ENCODE measurements at regions of chr5 and their contacts with region 1.

Region 1: GRCh38 chr5:1344975-1345838 is at the start of gene CLPTM1L:
- DNase-seq: peak; percentile 37 to 92
- H3K4me3 ChIP-seq: peak within 1 kb of the TSS; percentile 62 to 96
- H3K27ac ChIP-seq: peak within 1 kb of the TSS; percentile 79 to 88
- H3K4me1 ChIP-seq: peaks cover 2 to 17% of the 10 kb centered on the region in 2 donors
- H3K27me3 ChIP-seq: no peaks in the 10 kb centered on the region
- CTCF ChIP-seq: peak in 1 of 3 experiments; percentile 25
- total RNA-seq, gene CLPTM1L: 23.6 TPM

Region 2: DNA sequence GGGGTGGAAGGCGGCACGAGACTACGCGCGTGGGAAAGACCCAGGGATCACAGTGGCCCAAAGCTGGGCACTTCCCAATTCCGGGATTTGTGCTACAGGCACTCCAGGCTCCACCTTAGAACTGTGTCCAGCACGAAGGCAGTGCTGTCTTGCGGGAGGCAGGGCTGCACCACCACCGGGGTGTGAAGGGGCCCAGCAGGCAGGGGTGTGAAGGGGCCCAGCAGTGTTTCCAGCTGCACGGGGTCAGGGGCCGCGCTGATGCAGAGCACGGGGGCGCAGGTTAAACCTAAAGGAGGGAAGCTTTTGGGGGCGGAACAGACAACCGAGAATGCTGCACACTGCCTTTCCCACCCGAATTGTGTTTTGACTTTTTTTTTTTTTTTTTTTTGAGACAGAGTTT is 1074.9 kb before region 1 on chr5:
- intact Hi-C with region 1: loop called (anchors 5 kb)
- DNase-seq: peak in 1 of 2 donors; percentile 62
- H3K4me3 ChIP-seq: peak overlapping the region in 1 of 2 donors; percentile 99
- H3K27ac ChIP-seq: no peak overlapping the region
- H3K4me1 ChIP-seq: peaks cover 0 to 7% of the 10 kb centered on the region in 2 donors
- H3K27me3 ChIP-seq: no peaks in the 10 kb centered on the region
- CTCF ChIP-seq: no peak

Region 3: DNA sequence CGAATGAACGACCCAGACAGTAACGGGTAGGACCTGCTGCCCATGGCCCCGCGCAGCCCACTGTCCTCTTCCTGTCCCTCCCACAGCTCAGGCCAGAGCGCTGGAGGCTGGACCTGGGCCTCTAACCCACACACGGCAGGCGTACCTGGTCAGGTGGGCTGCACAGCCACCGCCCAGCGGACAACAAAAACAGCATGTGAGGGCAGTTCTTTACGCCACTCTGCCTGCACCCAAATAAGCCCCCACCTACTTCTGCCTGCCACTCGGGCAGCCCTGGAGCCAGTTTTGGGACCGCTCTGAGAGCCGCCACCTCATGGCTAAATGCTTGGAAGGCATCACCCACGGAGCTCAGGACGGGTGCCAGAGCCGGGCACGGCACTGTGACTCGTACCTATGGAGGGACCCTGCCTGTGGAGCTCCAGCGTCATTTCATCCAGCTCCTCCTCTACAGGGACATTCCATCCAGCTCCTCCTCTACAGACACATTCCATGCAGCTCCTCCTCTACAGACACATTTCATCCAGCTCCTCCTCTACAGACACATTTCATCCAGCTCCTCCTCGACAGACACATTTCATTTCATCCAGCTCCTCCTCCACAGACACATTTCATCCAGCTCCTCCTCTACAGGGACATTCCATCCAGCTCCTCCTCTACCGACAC is 19.2 kb before region 1 on chr5:
- intact Hi-C with region 1: no loop called
- DNase-seq: peak in 1 of 2 donors; percentile 51
- H3K4me3 ChIP-seq: no peak overlapping the region
- H3K27ac ChIP-seq: no peak overlapping the region
- H3K4me1 ChIP-seq: no peaks in the 10 kb centered on the region
- H3K27me3 ChIP-seq: no peaks in the 10 kb centered on the region
- CTCF ChIP-seq: no peak

Region 4: DNA sequence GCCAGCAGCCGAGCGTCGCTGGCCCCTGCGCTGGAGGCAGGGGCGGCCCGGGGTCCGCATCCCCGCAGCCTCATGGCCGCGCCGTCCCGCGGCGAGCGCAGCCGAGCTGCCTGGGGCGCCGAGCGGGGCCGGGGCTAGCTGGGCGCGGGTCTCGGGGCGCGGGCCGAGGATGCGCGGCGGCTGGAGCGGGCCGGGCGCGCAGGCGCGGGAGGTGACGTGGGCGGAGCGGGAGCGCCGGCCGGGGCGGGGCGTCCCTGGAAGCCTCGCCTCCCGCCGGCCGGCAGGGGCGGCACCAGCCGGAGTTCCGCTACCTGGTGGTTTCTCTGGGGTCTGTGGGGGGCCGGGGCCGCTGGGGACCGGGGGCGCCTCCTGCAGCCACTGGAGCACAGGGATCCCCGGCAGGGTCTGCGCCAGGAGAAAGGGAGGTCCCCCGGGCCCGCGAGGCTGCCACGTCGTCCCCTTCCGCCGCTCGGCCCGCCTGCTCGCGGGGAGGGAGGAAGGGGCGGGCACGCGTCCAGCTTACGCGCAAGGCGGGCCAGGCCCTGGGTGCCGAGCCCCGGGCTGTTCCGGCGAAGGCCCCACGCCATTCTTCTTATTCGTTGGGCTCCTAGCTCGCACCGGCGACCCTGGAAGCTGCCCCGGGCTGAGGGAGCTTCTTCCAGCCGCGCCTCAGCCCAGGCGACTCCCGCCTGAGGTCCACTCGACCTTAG is 178.7 kb after region 1 on chr5 and contains the start of gene LPCAT1:
- intact Hi-C with region 1: loop called (anchors 5 kb)
- DNase-seq: peak; percentile 8 to 86
- H3K4me3 ChIP-seq: peak within 1 kb of the TSS; percentile 82 to 88
- H3K27ac ChIP-seq: peak within 1 kb of the TSS; percentile 89 to 91
- H3K4me1 ChIP-seq: peaks cover 0 to 16% of the 10 kb centered on the region in 2 donors
- H3K27me3 ChIP-seq: no peaks in the 10 kb centered on the region
- CTCF ChIP-seq: peak in 1 of 3 experiments; percentile 18
- total RNA-seq, gene LPCAT1: 86.2 TPM

Region 5: GRCh38 chr5:1594357-1595106 is 249.3 kb after region 1 on chr5:
- intact Hi-C with region 1: loop called (anchors 5 kb)
- DNase-seq: peak in 1 of 2 donors; percentile 81
- H3K4me3 ChIP-seq: peak overlapping the region; percentile 67 to 71
- H3K27ac ChIP-seq: peak overlapping the region; percentile 78 to 82
- H3K4me1 ChIP-seq: peaks cover 0 to 3% of the 10 kb centered on the region in 2 donors
- H3K27me3 ChIP-seq: no peaks in the 10 kb centered on the region
- CTCF ChIP-seq: peak in 2 of 3 experiments; percentile 41 to 48

Region 6: GRCh38 chr5:1633605-1634336 is 288.6 kb after region 1 on chr5:
- intact Hi-C with region 1: loop called (anchors 2 kb)
- DNase-seq: peak; percentile 30 to 86
- H3K4me3 ChIP-seq: peak overlapping the region; percentile 79 to 87
- H3K27ac ChIP-seq: peak overlapping the region; percentile 90
- H3K4me1 ChIP-seq: peaks cover 0 to 5% of the 10 kb centered on the region in 2 donors
- H3K27me3 ChIP-seq: no peaks in the 10 kb centered on the region
- CTCF ChIP-seq: no peak

Region 7: DNA sequence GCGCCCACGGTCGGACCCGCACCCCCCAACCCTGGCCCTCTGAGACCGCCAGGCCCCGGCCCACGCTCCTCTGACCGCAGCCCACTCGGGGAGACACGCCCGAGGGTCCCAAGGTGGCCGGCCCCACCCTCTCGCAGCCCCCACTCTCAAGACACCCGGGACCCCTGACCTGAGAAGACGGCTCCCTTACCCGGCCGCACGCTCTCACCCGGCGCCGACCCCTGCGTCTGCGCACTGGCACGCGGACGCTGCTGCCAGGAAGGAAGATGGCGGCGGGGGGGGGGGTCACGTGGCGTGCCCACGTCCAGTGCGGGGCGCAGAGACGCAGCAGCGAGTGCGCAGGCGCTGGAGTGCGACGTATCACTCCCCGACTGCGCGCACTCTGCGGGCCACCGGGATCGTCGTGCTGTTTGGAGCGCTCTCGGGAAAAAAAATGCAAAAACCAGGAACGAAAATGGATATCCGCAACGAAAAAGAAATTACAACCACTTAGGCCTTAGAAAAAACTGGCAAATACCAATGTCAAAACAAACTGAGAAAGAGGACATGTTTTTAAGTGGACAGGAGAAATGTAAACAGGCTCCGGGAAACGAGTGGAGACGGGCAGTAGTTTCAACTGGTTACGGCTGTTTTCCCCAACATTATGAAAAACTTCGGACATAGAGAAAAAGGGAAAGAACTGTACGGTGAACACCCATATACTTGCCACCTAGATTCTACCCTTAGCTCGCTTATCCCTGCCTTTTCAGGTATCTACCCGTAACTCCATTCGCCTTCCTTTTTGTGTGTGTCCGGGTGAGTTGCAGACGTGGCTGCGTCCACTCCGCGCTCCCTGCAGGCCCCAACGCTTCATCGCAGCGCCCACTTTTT is 454.6 kb after region 1 on chr5 and contains the start of gene MRPL36:
- intact Hi-C with region 1: loop called (anchors 2 kb)
- DNase-seq: peak; percentile 64 to 93
- H3K4me3 ChIP-seq: peak within 1 kb of the TSS; percentile 80 to 97
- H3K27ac ChIP-seq: peak within 1 kb of the TSS; percentile 63 to 80
- H3K4me1 ChIP-seq: peaks cover 4 to 14% of the 10 kb centered on the region in 2 donors
- H3K27me3 ChIP-seq: no peaks in the 10 kb centered on the region
- CTCF ChIP-seq: no peak
- total RNA-seq, gene MRPL36: 21.4 TPM

Measured in ascending aorta (tissue), 2 donors.